ENCODE measurements at regions of chr11 and their contacts with region 1.

Region 1: DNA sequence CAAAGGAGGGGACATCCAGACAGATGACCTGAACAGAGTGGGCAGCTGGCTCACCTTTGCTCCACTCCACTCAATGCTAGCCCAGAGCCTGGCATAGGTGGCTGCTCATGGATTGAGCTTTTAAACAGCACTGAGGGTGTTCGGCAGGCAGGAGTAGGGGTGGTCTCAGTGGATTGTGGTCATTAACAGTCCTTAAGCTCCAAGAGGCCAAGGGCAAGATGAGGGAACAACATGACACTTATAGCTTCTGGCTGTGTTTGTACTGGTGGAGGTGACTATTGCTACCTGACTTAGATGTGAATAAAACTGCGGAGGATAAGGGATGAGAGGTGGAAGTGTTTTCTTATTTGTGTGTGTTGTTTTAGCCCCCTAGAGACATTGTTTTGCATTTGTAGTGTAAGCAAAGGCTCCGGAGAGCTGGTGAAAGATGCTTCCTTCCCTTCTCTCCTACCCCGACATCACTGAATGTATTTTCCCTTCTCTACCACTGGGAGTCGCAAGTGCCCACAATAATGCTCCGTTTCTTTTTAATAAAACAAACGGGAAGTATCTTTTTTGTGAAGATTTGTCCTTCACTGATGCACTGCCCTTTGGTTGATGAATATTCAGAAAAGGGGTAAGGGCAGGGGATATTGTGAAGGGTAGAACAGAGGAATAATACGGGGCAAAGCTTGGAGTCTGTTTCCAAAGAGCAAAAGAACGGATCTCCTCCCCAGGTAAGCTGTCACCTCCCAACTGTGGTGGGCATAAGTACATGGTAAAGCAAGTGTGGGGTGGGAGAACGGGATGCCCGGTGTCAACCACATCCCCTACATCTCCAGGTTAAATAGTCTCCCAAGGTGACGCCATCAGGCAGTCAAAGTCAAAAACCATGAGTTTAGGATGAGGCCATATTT is 27.5 kb upstream of the MTNR1B start:
- DNase-seq: peak; percentile 23
- ATAC-seq: peak; percentile 72
- H3K4me3 ChIP-seq: no peak overlapping the region
- H3K27ac ChIP-seq: no peak overlapping the region
- H3K4me1 ChIP-seq: no peaks in the 10 kb centered on the region
- H3K27me3 ChIP-seq: no peaks in the 10 kb centered on the region
- CTCF ChIP-seq: peak; percentile 72
- EP300 ChIP-seq: no peak
- POLR2A ChIP-seq: no peak
- RAD21 ChIP-seq: peak; percentile 66

Region 2: DNA sequence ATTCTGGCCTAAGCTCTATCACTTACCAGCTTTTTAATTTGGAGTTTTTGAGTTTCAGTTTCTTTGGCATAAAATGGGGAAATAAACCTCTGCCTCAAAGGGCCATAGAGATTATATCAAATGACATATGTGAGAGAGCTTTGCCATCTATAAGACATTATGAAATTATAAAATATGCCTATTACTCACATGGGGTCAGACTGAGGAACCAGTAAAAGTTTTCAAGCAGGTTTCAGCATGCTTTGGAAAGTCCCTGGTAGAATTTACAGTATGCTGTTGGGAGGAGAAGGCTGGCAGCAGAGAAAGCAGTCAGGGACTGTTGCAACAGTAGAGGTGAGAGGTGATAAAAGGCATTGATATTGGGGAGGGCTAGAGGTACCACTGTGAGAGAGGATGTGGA is 13.9 kb after region 1 on chr11:
- CTCF ChIA-PET with region 1: no interaction called
- POLR2A ChIA-PET with region 1: no interaction called
- in situ Hi-C with region 1: no loop called
- intact Hi-C with region 1: no loop called
- DNase-seq: no peak
- ATAC-seq: no peak
- H3K4me3 ChIP-seq: no peak overlapping the region
- H3K27ac ChIP-seq: no peak overlapping the region
- H3K4me1 ChIP-seq: no peaks in the 10 kb centered on the region
- H3K27me3 ChIP-seq: no peaks in the 10 kb centered on the region; a peak in 1 of 5 replicates
- CTCF ChIP-seq: no peak
- EP300 ChIP-seq: no peak
- POLR2A ChIP-seq: no peak
- RAD21 ChIP-seq: no peak

Region 3: GRCh38 chr11:93000511-93001476 is 58.9 kb after region 1 on chr11:
- CTCF ChIA-PET with region 1: no interaction called
- POLR2A ChIA-PET with region 1: no interaction called
- in situ Hi-C with region 1: no loop called
- intact Hi-C with region 1: no loop called
- DNase-seq: peak; percentile 10
- ATAC-seq: no peak
- H3K4me3 ChIP-seq: no peak overlapping the region
- H3K27ac ChIP-seq: no peak overlapping the region
- H3K4me1 ChIP-seq: no peaks in the 10 kb centered on the region
- H3K27me3 ChIP-seq: no peaks in the 10 kb centered on the region
- CTCF ChIP-seq: no peak
- EP300 ChIP-seq: no peak
- POLR2A ChIP-seq: no peak
- RAD21 ChIP-seq: no peak

Region 4: DNA sequence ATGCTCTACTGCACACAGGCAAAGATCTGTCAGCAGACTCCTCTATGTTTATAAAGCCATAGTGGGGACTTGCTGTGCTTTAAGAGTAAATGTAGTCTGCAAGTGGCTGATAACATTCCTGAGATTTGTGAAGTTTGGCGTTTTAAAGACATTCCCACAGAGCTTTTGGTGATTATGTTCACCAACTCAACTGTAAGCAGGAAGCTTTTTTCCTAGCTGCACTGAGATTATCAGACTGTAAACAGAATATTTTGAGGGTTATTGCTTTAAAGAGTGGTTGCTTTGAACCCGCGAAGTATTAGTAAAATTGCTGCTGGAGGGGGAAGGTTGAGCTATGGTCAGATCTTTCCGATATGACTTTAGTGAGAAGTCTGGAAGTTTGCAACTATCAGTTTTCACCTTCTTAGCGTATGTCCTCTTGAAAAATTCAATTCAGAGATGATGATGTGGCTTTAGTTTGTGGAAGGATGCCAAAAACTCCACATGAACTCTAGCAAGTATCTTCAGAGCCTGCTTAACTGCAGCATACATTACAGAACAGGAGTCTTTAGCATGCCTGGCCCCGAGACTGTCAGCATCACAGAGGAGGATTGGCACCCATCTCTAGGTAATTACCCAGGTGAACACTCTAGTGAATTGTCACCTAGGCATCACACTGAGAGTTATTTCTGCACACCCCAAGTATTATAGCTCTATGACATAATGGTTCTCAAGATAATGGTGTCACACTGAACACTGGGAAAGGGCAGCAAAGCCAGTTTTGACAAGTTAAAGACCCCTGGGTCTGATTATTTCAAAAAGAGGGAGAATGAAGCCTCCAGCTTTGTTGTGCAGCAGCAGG is 117.4 kb after region 1 on chr11:
- CTCF ChIA-PET with region 1: interaction called, 22 read pairs
- POLR2A ChIA-PET with region 1: no interaction called
- in situ Hi-C with region 1: no loop called
- intact Hi-C with region 1: no loop called
- DNase-seq: no peak
- ATAC-seq: no peak
- H3K4me3 ChIP-seq: no peak overlapping the region
- H3K27ac ChIP-seq: no peak overlapping the region
- H3K4me1 ChIP-seq: no peaks in the 10 kb centered on the region
- H3K27me3 ChIP-seq: no peaks in the 10 kb centered on the region
- CTCF ChIP-seq: no peak
- EP300 ChIP-seq: no peak
- POLR2A ChIP-seq: no peak
- RAD21 ChIP-seq: no peak

Region 5: DNA sequence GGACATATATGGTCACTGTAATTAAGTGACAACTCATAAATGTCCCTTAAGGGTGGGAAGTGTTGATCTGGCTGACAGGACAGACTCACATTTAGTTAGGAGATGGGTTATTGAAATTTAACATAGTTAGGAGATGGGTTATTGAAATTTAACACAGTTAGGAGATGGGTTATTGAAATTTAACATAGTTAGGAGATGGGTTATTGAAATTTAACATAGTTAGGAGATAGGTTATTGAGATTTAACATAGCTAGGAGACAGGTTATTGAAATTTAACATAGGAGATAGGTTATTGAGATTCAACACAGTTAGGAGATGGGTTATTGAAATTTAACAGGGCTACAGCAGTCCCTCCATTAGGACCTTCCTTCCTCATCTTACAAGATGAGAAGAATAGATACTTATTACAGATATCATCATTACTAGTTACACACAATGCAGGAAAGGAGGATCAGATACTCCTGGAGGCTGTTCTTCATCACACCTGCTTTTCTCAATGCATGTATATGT is 126.0 kb after region 1 on chr11:
- CTCF ChIA-PET with region 1: interaction called, 22 read pairs
- POLR2A ChIA-PET with region 1: no interaction called
- in situ Hi-C with region 1: loop called (anchors 5 kb)
- intact Hi-C with region 1: loop called (anchors 1 kb)
- DNase-seq: no peak
- ATAC-seq: no peak
- H3K4me3 ChIP-seq: no peak overlapping the region
- H3K27ac ChIP-seq: no peak overlapping the region
- H3K4me1 ChIP-seq: peaks cover 7% of the 10 kb centered on the region
- H3K27me3 ChIP-seq: no peaks in the 10 kb centered on the region
- CTCF ChIP-seq: no peak
- EP300 ChIP-seq: no peak
- POLR2A ChIP-seq: no peak
- RAD21 ChIP-seq: no peak

Region 6: DNA sequence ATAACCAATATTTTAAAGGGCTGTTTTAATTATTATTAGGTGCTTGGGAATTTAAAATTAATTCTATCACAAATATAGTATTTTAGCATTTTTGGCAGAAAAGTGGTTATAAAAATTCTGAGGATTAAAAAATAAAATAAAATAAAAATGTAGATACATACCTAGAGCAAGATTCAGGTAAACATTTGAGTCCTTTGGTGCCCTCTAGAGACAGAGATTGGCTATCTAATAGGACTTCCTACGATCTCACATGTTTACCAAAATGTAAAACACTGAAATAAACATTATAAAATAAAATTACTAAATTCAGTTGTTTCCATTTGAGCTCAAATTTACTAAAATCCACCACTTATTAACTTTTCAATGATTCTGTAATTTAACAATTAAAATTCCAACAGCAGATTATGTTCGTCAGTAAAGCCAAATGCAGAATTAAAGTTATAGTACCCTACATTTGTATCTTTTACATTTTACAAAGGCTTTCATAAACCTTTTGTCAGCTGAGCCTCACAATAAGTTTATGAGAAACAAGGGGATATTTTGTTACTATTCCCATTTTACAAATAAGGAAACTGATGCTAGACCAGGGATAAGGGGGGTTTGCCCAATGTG is 228.1 kb after region 1 on chr11:
- CTCF ChIA-PET with region 1: interaction called, 3 read pairs
- POLR2A ChIA-PET with region 1: no interaction called
- in situ Hi-C with region 1: loop called (anchors 25 kb)
- intact Hi-C with region 1: loop called (anchors 2 kb)
- DNase-seq: peak; percentile 24
- ATAC-seq: no peak
- H3K4me3 ChIP-seq: no peak overlapping the region
- H3K27ac ChIP-seq: no peak overlapping the region
- H3K4me1 ChIP-seq: peaks cover 2% of the 10 kb centered on the region; the same call in 1 of the 2 replicates
- H3K27me3 ChIP-seq: no peaks in the 10 kb centered on the region
- CTCF ChIP-seq: peak; percentile 39
- EP300 ChIP-seq: no peak
- POLR2A ChIP-seq: no peak
- RAD21 ChIP-seq: no peak

Region 7: DNA sequence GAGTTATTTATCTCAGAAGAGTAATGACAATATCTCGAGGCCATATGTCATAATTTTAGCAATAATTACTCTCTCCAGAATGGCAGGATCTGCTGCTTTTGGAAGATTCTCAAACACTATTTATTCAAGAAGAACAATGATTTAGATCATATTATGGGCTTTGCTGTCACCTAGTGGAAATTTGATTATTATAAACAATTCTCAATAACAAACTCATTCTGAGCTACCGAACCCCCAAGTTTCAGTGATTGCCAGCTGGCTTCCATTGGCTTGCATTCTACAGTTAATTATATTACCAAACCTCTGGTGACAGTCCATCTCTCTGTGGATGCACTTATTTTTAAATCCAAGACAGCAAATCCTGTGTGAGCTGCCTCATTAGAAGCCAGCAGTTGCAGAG is 283.7 kb after region 1 on chr11:
- CTCF ChIA-PET with region 1: interaction called, 11 read pairs
- POLR2A ChIA-PET with region 1: no interaction called
- in situ Hi-C with region 1: loop called (anchors 10 kb)
- intact Hi-C with region 1: loop called (anchors 1 kb)
- DNase-seq: no peak
- ATAC-seq: no peak
- H3K4me3 ChIP-seq: no peak overlapping the region
- H3K27ac ChIP-seq: no peak overlapping the region
- H3K4me1 ChIP-seq: peaks cover 14% of the 10 kb centered on the region
- H3K27me3 ChIP-seq: peaks cover 0 to 6% of the 10 kb centered on the region in 2 experiments; a peak in 2 of 5 replicates
- CTCF ChIP-seq: peak; percentile 40
- EP300 ChIP-seq: no peak
- POLR2A ChIP-seq: no peak
- RAD21 ChIP-seq: no peak

Region 8: DNA sequence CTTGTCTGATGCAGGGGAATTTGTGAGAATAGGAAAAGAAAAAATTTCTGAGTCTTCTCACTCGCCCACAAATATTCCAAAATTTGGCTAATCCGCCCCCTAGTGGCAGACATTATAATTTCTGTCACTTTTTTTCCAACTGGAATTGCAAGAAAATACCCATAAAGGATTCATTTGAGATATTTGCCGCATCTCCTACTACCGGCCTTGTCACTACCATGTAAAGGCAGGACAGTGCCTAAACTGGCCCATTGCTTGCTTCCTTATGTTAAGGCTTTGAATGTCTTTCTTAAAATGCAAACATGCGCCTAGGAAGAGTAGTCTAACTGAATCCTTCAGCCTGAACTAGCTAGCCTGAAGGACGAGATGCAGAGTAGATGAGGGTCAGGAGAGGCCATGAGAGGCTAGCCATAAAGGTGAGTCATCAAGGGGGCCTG is 710.3 kb after region 1 on chr11:
- CTCF ChIA-PET with region 1: no interaction called
- POLR2A ChIA-PET with region 1: no interaction called
- in situ Hi-C with region 1: loop called (anchors 25 kb)
- intact Hi-C with region 1: loop called (anchors 10 kb)
- DNase-seq: peak; percentile 17
- ATAC-seq: peak; percentile 40
- H3K4me3 ChIP-seq: no peak overlapping the region
- H3K27ac ChIP-seq: no peak overlapping the region
- H3K4me1 ChIP-seq: no peaks in the 10 kb centered on the region
- H3K27me3 ChIP-seq: peaks cover 0 to 3% of the 10 kb centered on the region in 2 experiments; a peak in 1 of 5 replicates
- CTCF ChIP-seq: peak; percentile 64
- EP300 ChIP-seq: no peak
- POLR2A ChIP-seq: no peak
- RAD21 ChIP-seq: no peak

Measured in HepG2 (cell line).